A673 (cell line): ENCODE measurements at regions of chr1 and their contacts with region 1.

Region 1: GRCh38 chr1:218361298-218362065 is 16.3 kb downstream of the TGFB2 start:
- DNase-seq: peak; percentile 69
- H3K4me3 ChIP-seq: no peak overlapping the region
- H3K27ac ChIP-seq: no peak overlapping the region
- H3K4me1 ChIP-seq: no peaks in the 10 kb centered on the region
- H3K27me3 ChIP-seq: no peaks in the 10 kb centered on the region
- CTCF ChIP-seq: peak; percentile 88

Region 2: DNA sequence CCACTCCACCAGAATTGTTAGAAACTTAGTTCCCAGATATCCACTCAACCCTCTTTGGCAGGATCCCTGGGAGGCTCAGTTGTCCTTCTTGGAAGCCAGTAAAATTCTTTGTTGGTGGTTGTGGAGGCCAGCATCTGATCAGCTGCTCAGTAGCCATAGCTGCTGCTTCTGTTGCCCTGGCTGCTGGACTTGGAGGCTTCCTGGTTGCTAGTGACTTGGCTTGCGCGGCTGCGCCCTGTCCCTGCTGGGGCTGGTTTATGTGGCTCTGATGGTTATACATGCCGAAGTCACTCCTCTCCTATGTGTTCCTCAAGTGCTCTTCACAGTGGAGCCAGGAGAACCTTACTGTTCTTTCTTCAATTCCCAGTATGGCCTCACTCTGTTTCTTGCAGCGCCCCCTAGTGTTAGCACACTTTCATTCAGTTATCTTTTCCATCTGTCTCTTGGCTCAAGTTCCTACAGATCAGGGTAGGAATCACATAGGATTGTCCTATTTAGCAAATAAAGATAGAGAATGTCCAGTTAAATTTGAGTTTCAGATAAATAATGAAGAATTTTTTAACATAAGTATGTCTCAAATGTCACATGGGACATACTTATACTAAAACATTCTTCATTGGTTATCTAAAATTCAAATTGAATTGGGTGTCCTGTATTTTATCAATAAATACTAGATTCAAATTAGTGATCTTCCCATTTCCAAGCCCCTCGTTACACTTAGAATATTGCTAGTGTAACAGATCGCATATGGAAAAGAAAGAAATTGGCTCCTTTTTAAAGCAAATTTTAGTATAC is 160.1 kb after region 1 on chr1:
- CTCF ChIA-PET with region 1: no interaction called
- POLR2A ChIA-PET with region 1: no interaction called
- intact Hi-C with region 1: loop called (anchors 1 kb)
- DNase-seq: peak; percentile 82
- H3K4me3 ChIP-seq: no peak overlapping the region
- H3K27ac ChIP-seq: no peak overlapping the region
- H3K4me1 ChIP-seq: peaks cover 34% of the 10 kb centered on the region
- H3K27me3 ChIP-seq: no peaks in the 10 kb centered on the region
- CTCF ChIP-seq: peak; percentile 95

Region 3: DNA sequence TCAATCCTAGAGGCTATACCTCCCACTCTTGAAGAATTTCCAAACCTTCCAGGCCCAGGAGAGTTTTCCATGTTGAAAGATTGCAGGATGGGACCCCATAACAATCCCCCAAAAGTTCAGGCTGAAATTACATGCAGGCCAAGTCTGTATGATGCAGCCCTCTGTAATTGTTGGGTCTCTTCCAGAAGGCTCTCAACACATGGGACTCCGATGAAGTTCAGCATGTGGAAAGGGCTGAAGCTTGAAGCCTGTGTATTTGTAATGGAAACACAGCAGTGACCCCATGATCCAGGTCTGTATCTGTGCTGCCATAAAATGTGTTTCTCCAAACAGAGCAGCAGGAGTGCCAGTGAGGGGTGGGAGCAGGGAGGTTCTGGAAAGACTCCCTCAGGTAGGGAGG is 609.7 kb after region 1 on chr1:
- CTCF ChIA-PET with region 1: no interaction called
- POLR2A ChIA-PET with region 1: no interaction called
- intact Hi-C with region 1: loop called (anchors 10 kb)
- DNase-seq: no peak
- H3K4me3 ChIP-seq: no peak overlapping the region
- H3K27ac ChIP-seq: no peak overlapping the region
- H3K4me1 ChIP-seq: no peaks in the 10 kb centered on the region
- H3K27me3 ChIP-seq: no peaks in the 10 kb centered on the region
- CTCF ChIP-seq: no peak